ENCODE measurements at regions of chr11 and their contacts with region 1.

Region 1: DNA sequence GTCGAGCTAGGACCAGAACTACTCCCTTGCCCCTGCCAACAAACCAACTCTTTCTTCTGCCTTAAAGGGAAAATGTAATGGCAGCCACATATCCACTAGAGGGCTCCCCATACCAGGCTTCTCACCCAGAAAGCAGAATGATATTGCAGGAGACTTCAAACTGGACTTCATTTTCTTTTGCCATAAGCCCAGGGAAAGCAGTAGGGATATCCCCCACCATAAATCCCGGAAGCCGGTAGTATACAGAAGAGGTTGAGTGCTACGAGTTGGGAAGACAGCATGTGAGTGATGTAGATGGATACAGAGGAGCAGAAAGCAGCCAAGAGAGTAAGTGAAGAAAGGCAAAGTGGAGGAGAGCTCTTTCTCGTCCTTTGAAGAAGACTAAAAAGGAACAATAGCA is 12.1 kb downstream of the PLAAT5 start:
- DNase-seq: peak; percentile 68
- ATAC-seq: peak; percentile 97
- H3K4me3 ChIP-seq: no peak overlapping the region
- H3K27ac ChIP-seq: no peak overlapping the region
- H3K4me1 ChIP-seq: peaks cover 0 to 6% of the 10 kb centered on the region in 2 experiments; a peak in 2 of 4 replicates
- H3K27me3 ChIP-seq: no peaks in the 10 kb centered on the region
- CTCF ChIP-seq: peak; percentile 85 to 94 (median 88)
- POLR2A ChIP-seq: no peak
- RAD21 ChIP-seq: peak; percentile 98

Region 2: GRCh38 chr11:63490551-63491239 is 11.8 kb after region 1 on chr11 and contains the start of gene PLAAT5:
- CTCF ChIA-PET with region 1: interaction called, 18 read pairs
- POLR2A ChIA-PET with region 1: no interaction called
- RAD21 ChIA-PET with region 1: no interaction called
- intact Hi-C with region 1: no loop called
- DNase-seq: no peak
- ATAC-seq: no peak
- H3K4me3 ChIP-seq: no peak within 1 kb of the TSS
- H3K27ac ChIP-seq: no peak within 1 kb of the TSS
- H3K4me1 ChIP-seq: no peaks in the 10 kb centered on the region
- H3K27me3 ChIP-seq: no peaks in the 10 kb centered on the region
- CTCF ChIP-seq: no peak
- POLR2A ChIP-seq: no peak
- RAD21 ChIP-seq: no peak
- total RNA-seq, gene PLAAT5: not detected

Region 3: DNA sequence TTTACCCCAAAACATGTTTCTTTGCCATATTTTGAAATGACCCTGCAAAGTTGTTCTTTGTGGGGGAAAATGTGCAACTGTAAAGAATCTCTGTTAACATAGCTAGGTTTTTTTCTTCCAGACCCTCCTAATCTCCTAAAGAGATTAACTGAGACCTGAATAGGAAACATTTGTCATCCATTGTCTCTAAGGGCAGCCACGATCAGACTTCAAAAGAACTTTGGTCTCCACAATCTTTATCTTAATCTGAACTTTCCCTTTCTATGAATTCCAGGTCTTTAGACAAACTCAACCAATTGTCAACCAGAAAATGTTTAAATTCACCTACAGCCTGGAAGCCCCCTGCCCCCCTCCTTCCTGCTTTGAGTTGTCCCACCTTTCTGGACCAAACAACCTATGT is 22.3 kb after region 1 on chr11:
- CTCF ChIA-PET with region 1: no interaction called
- POLR2A ChIA-PET with region 1: no interaction called
- RAD21 ChIA-PET with region 1: no interaction called
- intact Hi-C with region 1: no loop called
- DNase-seq: no peak
- ATAC-seq: no peak
- H3K4me3 ChIP-seq: no peak overlapping the region
- H3K27ac ChIP-seq: no peak overlapping the region
- H3K4me1 ChIP-seq: no peaks in the 10 kb centered on the region
- H3K27me3 ChIP-seq: no peaks in the 10 kb centered on the region
- CTCF ChIP-seq: no peak
- POLR2A ChIP-seq: no peak
- RAD21 ChIP-seq: no peak

Region 4: GRCh38 chr11:63621931-63622782 is 143.3 kb after region 1 on chr11:
- CTCF ChIA-PET with region 1: interaction called, 14 read pairs
- POLR2A ChIA-PET with region 1: no interaction called
- RAD21 ChIA-PET with region 1: no interaction called
- intact Hi-C with region 1: no loop called
- DNase-seq: no peak
- ATAC-seq: no peak
- H3K4me3 ChIP-seq: no peak overlapping the region
- H3K27ac ChIP-seq: no peak overlapping the region
- H3K4me1 ChIP-seq: peaks cover 0 to 14% of the 10 kb centered on the region in 2 experiments; a peak in 2 of 4 replicates
- H3K27me3 ChIP-seq: 0 out of 2 replicates have a peak, but pooled peaks cover 4% of the 10 kb centered on the region
- CTCF ChIP-seq: no peak
- POLR2A ChIP-seq: no peak
- RAD21 ChIP-seq: no peak

Region 5: GRCh38 chr11:63738720-63739360 is 259.9 kb after region 1 on chr11:
- CTCF ChIA-PET with region 1: interaction called, 5 read pairs
- POLR2A ChIA-PET with region 1: no interaction called
- RAD21 ChIA-PET with region 1: no interaction called
- intact Hi-C with region 1: loop called (anchors 5 kb)
- DNase-seq: peak; percentile 64
- ATAC-seq: peak; percentile 58; the same call in 1 of the 2 replicates
- H3K4me3 ChIP-seq: no peak overlapping the region
- H3K27ac ChIP-seq: no peak overlapping the region
- H3K4me1 ChIP-seq: peaks cover 0 to 6% of the 10 kb centered on the region in 2 experiments; a peak in 1 of 4 replicates
- H3K27me3 ChIP-seq: no peaks in the 10 kb centered on the region
- CTCF ChIP-seq: peak; percentile 62 to 95 (median 72); a peak in 5 of 6 replicates
- POLR2A ChIP-seq: no peak
- RAD21 ChIP-seq: peak; percentile 74

Region 6: GRCh38 chr11:64148200-64148916 is 669.5 kb after region 1 on chr11:
- CTCF ChIA-PET with region 1: interaction called, 4 read pairs
- POLR2A ChIA-PET with region 1: no interaction called
- RAD21 ChIA-PET with region 1: no interaction called
- intact Hi-C with region 1: loop called (anchors 2 kb)
- DNase-seq: peak; percentile 27
- ATAC-seq: peak; percentile 60
- H3K4me3 ChIP-seq: no peak overlapping the region
- H3K27ac ChIP-seq: no peak overlapping the region
- H3K4me1 ChIP-seq: peaks cover 0 to 10% of the 10 kb centered on the region in 2 experiments; a peak in 2 of 4 replicates
- H3K27me3 ChIP-seq: no peaks in the 10 kb centered on the region
- CTCF ChIP-seq: peak; percentile 86 to 96 (median 92); a peak in 5 of 6 replicates
- POLR2A ChIP-seq: no peak
- RAD21 ChIP-seq: peak; percentile 90

Measured in HCT116 (cell line).